ENCODE measurements at regions of chr14 and their contacts with region 1.

Region 1: DNA sequence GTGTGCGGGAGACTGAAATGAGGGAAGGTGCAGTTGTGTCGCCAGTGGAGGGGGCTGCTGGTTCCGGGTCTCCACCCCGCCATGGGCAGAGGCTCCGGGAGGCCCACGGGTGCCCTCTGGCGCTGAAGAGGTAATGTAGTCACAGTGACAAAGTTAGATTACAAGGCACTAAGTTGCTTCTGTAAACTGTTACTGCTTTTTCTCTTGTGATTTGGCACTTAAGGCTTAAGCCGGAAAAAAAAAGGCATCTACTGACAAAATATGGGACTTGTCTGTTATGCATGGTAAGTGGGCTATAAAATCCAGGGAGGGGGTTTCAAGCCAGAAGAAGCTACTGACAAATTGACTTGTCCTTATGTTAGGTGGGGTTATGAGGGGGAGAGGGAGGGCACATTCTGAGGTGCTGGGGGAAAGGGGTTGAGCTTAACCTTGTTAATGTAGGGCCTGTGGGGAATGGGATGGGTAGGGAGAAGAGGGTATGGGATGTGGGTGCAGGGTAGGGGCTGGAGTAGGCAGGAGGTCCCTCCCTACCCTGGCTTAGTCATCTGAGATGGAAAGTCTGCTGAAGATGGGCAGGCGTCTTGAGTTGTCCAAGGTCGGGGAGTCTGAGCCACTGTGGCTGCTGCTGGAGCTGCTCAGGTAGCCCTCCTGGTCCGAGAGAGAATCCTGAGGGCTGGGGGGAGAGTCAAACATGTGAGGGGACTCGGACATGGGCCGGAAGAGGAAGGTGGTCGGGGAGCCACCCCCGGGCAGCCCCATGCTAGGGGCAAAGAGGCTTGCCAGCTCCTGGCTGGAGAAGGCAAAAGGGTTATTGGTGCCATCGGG is 3.7 kb downstream of the ZFP36L1 start:
- DNase-seq: peak; percentile 59
- H3K4me3 ChIP-seq: peak overlapping the region; percentile 72 to 98 (median 90)
- H3K27ac ChIP-seq: peak overlapping the region; percentile 98
- H3K4me1 ChIP-seq: peaks cover 30% of the 10 kb centered on the region
- H3K27me3 ChIP-seq: no peaks in the 10 kb centered on the region
- CTCF ChIP-seq: peak; percentile 37 to 78

Region 2: GRCh38 chr14:68248481-68249255 is 540.5 kb before region 1 on chr14:
- CTCF ChIA-PET with region 1: no interaction called
- dilution Hi-C with region 1: no loop called
- in situ Hi-C with region 1: loop called in 1 of 2 experiments (anchors 10 kb)
- intact Hi-C with region 1: loop called (anchors 1 kb)
- DNase-seq: peak; percentile 35
- H3K4me3 ChIP-seq: no peak overlapping the region
- H3K27ac ChIP-seq: peak overlapping the region; percentile 22
- H3K4me1 ChIP-seq: peaks cover 37% of the 10 kb centered on the region
- H3K27me3 ChIP-seq: no peaks in the 10 kb centered on the region
- CTCF ChIP-seq: peak; percentile 29 to 62

Region 3: DNA sequence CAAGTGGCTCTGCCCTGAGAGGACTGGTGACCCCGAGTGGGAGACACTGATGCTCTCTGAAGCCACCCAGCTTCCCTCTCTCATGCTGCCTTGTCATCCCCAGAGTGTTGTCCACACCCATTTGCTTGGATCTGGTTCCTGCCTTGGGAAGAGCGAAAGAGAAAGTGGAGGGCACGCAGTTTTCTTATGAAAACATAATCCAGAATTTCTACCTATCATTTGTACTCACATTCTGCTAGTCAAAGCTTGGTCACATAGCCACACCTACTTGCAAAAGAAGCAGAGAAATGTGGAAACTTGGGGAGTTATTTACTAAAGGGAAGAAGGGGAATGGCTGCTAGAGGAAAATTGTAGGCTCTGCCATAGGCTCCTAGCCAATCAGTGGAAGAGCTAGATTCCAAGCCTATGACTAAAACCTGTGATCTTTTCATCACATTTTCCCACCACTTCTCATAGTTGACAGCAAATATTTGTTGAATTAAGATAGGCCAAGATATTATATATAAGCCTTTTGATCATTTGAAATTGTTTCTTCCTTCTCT is 322.6 kb before region 1 on chr14:
- CTCF ChIA-PET with region 1: interaction called, 3 read pairs
- dilution Hi-C with region 1: no loop called
- in situ Hi-C with region 1: no loop called
- intact Hi-C with region 1: loop called (anchors 2 kb)
- DNase-seq: peak; percentile 91
- H3K4me3 ChIP-seq: no peak overlapping the region
- H3K27ac ChIP-seq: peak overlapping the region; percentile 84
- H3K4me1 ChIP-seq: peaks cover 78% of the 10 kb centered on the region
- H3K27me3 ChIP-seq: no peaks in the 10 kb centered on the region
- CTCF ChIP-seq: no peak

Region 4: GRCh38 chr14:68577827-68578541 is 211.2 kb before region 1 on chr14:
- CTCF ChIA-PET with region 1: no interaction called
- dilution Hi-C with region 1: no loop called
- in situ Hi-C with region 1: no loop called
- intact Hi-C with region 1: loop called (anchors 1 kb)
- DNase-seq: peak; percentile 96
- H3K4me3 ChIP-seq: no peak overlapping the region
- H3K27ac ChIP-seq: peak overlapping the region; percentile 82
- H3K4me1 ChIP-seq: peaks cover 40% of the 10 kb centered on the region
- H3K27me3 ChIP-seq: no peaks in the 10 kb centered on the region
- CTCF ChIP-seq: no peak

Region 5: GRCh38 chr14:68685419-68686204 is 103.6 kb before region 1 on chr14:
- CTCF ChIA-PET with region 1: interaction called, 5 read pairs
- dilution Hi-C with region 1: no loop called
- in situ Hi-C with region 1: loop called in 1 of 2 experiments (anchors 5 kb)
- intact Hi-C with region 1: loop called (anchors 1 kb)
- DNase-seq: peak; percentile 99
- H3K4me3 ChIP-seq: no peak overlapping the region
- H3K27ac ChIP-seq: peak overlapping the region; percentile 96
- H3K4me1 ChIP-seq: peaks cover 77% of the 10 kb centered on the region
- H3K27me3 ChIP-seq: no peaks in the 10 kb centered on the region
- CTCF ChIP-seq: no peak

Region 6: GRCh38 chr14:68816262-68816942 is 27.2 kb after region 1 on chr14:
- CTCF ChIA-PET with region 1: interaction called, 12 read pairs
- dilution Hi-C with region 1: no loop called
- in situ Hi-C with region 1: no loop called
- intact Hi-C with region 1: loop called (anchors 1 kb)
- DNase-seq: peak; percentile 82
- H3K4me3 ChIP-seq: peak overlapping the region; percentile 31 to 54 (median 45)
- H3K27ac ChIP-seq: peak overlapping the region; percentile 80
- H3K4me1 ChIP-seq: peaks cover 29% of the 10 kb centered on the region
- H3K27me3 ChIP-seq: no peaks in the 10 kb centered on the region
- CTCF ChIP-seq: peak; percentile 78 to 91